Endothelial cell of umbilical vein (primary cell): ENCODE measurements at regions of chr5 and their contacts with region 1.

Region 1: GRCh38 chr5:38556599-38557305 is at the start of gene LIFR:
- DNase-seq: peak; percentile 80
- H3K4me3 ChIP-seq: peak within 1 kb of the TSS; percentile 82 to 86 (median 83)
- H3K27ac ChIP-seq: peak within 1 kb of the TSS; percentile 68
- H3K4me1 ChIP-seq: peaks cover 21% of the 10 kb centered on the region
- H3K27me3 ChIP-seq: peaks cover 0 to 2% of the 10 kb centered on the region in 2 experiments
- CTCF ChIP-seq: peak in 1 of 2 donors; percentile 3
- POLR2A ChIP-seq: peak; percentile 66
- total RNA-seq, gene LIFR: 34.9 and 36.4 TPM in 2 replicates

Region 2: DNA sequence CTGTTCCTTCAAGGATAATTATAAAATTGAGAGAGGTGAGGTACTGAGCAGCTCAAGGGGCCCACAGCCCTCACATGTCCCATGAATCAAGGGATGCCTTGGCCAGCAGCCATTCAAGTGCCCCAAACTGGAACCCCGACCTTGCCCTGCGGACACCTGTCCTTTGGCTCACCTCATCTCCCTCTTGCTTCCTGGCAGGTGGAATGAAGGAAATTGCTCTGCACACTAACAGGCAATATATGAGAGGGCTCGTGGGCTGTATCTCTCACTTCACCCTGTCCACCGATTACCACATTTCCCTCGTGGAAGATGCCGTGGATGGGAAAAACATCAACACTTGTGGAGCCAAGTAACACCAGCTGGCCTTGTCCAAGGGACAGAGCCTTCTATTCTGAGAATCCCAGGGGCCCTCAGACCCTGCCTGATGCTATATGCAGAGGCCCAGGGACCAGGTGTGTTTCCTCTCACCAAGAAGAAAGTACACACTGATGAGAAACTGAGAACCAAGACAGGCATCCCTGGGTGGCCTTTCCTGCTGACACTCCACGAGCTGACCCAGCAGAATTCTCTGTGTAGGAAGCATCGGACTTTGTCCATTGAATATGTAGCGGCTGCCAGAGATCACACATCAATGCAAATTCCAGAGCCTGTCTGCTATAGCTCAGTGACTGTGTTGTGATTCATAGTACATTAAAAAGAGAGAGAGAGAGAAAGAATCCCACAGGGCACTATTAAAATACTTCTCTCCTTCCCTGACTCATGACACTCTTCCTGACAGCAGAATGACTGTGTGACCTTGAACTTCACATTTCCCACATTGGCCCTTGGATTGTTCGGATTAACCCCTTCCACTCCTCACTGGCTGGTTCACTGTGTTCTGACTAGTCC is 92.9 kb before region 1 on chr5:
- CTCF ChIA-PET with region 1: interaction called, 3 read pairs
- POLR2A ChIA-PET with region 1: no interaction called
- dilution Hi-C with region 1: no loop called
- intact Hi-C with region 1: loop called (anchors 2 kb)
- DNase-seq: peak; percentile 89
- H3K4me3 ChIP-seq: no peak overlapping the region
- H3K27ac ChIP-seq: peak overlapping the region; percentile 90
- H3K4me1 ChIP-seq: peaks cover 64% of the 10 kb centered on the region
- H3K27me3 ChIP-seq: no peaks in the 10 kb centered on the region
- CTCF ChIP-seq: no peak
- POLR2A ChIP-seq: peak; percentile 73

Region 3: DNA sequence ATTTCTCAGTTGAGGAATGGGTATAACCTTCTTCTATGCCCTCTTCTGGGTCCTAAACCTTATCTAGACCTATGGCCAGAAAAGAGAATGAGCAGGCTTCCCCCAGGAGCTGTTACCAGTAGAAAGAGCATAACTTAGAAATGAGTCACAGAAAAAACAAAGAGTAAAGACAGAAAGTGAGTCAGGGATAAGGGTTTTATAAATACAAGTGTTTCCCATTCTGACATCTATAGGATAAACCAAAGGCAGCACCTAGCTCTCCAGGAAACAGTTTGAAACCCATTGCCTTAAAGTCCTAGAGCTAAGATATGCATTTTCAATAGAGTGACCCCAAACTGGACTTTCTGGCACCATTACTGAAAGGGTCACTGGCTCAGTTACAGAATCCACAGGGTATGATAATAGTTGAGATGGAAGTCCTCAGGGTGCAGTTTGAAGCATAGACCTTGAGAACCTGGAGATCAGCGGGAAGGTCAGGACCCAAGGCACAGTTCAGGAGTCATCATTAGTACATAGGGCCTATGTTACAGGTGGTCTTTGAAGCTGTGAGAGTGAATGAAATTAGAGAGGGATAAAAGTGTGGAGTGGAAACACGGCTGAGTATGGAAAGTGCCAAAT is 42.4 kb after region 1 on chr5:
- CTCF ChIA-PET with region 1: interaction called, 6 read pairs
- POLR2A ChIA-PET with region 1: no interaction called
- dilution Hi-C with region 1: no loop called
- intact Hi-C with region 1: loop called (anchors 1 kb)
- DNase-seq: peak; percentile 87
- H3K4me3 ChIP-seq: no peak overlapping the region
- H3K27ac ChIP-seq: peak overlapping the region; percentile 66
- H3K4me1 ChIP-seq: peaks cover 59% of the 10 kb centered on the region
- H3K27me3 ChIP-seq: no peaks in the 10 kb centered on the region
- CTCF ChIP-seq: no peak
- POLR2A ChIP-seq: no peak

Region 4: DNA sequence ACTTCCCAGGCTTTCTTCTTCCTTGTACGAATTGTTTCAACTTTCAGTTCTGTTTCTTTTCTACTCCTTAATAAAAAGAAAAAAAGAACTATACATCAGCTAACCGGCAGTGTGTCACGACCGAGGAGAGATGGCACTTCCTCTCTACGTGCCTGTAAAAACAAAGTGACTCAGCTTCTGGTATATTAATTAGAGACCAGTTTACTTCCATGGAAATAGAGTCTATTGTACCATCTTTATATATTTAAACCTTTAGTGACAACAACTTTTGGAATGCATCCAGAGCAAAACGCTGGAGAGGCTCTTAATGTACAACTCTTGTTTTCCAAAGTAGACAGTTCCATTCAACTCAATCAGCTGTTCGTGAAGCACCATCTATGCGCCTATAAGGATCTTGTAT is 94.2 kb after region 1 on chr5:
- CTCF ChIA-PET with region 1: no interaction called
- POLR2A ChIA-PET with region 1: interaction called, 3 read pairs
- dilution Hi-C with region 1: no loop called
- intact Hi-C with region 1: loop called (anchors 1 kb)
- DNase-seq: peak; percentile 92
- H3K4me3 ChIP-seq: peak overlapping the region in 1 of 3 experiments; percentile 28
- H3K27ac ChIP-seq: peak overlapping the region; percentile 44
- H3K4me1 ChIP-seq: peaks cover 12% of the 10 kb centered on the region
- H3K27me3 ChIP-seq: peaks cover 0 to 2% of the 10 kb centered on the region in 2 experiments
- CTCF ChIP-seq: no peak
- POLR2A ChIP-seq: no peak

Region 5: DNA sequence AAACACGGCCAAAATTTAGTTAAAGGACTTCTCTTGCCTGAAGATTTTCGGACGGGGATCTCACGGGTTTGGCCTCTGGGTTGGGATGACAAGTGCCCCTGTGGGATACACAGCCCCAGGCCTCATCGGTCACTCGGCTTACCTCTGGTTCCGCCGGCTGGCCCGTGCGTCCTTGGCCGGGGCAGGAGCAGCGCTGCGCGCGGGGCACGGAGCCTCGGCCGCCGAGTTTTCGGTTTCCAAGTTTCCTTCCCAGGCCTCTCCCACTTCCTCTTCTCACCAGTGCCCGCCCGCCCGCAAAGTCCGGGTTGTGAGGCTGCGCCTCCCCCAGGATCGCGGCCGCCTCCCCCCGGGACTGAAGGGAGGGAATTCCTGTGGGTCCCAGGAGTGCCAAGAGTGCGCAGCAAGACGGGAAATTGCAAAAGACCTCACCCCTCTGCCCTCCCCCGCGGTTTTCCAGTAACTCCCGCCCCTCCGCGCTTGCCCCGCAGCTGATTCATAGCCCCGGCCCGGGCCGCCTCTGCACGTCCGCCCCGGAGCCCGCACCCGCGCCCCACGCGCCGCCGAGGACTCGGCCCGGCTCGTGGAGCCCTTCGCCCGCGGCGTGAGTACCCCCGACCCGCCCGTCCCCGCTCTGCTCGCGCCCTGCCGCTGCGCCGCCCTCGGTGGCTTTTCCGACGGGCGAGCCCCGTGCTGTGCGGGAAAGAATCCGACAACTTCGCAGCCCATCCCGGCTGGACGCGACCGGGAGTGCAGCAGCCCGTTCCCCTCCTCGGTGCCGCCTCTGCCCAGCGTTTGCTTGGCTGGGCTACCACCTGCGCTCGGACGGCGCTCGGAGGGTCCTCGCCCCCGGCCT is 289.0 kb after region 1 on chr5 and contains the start of gene OSMR:
- CTCF ChIA-PET with region 1: no interaction called
- POLR2A ChIA-PET with region 1: no interaction called
- dilution Hi-C with region 1: no loop called
- intact Hi-C with region 1: loop called (anchors 1 kb)
- DNase-seq: peak; percentile 94
- H3K4me3 ChIP-seq: peak within 1 kb of the TSS; percentile 77 to 86 (median 85)
- H3K27ac ChIP-seq: peak within 1 kb of the TSS; percentile 83
- H3K4me1 ChIP-seq: peaks cover 7% of the 10 kb centered on the region
- H3K27me3 ChIP-seq: peaks cover 3 to 6% of the 10 kb centered on the region in 2 experiments
- CTCF ChIP-seq: no peak
- POLR2A ChIP-seq: peak; percentile 76
- total RNA-seq, gene OSMR: 12.8 and 19.7 TPM in 2 replicates